ENCODE measurements at regions of chr4 and their contacts with region 1.

Region 1: DNA sequence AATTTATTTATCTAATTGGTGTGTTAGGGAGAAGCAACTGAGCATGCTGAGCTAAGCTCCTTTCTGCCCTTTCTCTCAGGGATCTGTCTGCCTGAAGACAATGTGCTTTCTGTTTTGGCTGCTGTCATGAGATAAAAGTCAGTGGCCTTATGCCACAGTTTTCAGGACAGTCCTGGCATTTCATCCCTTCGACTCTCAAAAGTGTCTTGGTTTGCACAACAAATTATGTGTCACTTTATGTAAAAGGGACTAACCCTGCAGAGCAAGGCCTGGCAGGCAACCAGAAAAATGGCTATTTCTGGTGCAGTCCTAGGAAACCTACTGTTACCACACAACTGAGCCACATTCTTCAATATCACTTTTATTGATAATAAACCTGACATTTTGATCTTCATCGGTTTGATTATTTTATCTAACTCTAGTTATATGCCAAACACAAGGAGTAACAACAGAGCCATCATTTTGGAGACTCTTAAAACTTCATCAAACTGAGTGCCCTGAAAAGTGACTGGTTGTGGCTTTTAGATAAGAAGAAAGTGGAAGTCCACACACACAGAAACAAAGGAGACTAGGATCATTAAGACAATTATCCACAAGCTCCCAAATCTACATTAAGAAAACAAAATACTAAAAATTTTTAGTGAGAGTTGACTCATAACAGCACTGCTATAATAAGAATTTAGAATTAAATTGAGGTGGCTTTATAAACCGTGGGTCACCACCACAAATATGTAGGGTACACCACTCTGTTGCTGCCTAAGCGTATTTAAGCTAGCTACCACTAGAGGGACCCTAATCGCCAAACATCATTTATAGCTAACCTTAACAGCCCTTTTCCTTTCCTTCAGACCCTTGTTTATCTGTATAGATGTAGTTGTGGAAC is 95.9 kb upstream of the PTPN13 start:
- DNase-seq: peak; percentile 32
- CTCF ChIP-seq: peak; percentile 87

Region 2: DNA sequence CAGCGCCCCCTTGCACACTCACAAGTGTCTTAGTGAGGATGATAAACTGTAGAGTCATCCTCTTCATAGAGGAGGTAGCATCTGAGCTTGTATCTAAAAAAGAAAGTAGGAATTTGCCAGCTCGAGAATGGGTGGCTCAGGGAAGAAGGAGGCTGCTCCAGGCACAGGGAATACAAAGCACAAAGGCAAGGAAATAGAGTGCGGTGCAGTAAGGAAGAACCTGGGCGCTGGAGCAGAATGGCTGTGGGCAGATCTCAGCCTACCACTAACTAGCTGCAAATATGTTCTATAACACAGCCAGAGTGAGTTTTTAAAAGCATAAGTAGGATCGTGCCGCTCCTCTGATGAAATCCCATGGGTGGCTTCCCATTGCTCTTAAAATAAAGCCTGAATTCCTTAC is 76.8 kb before region 1 on chr4:
- CTCF ChIA-PET with region 1: no interaction called
- POLR2A ChIA-PET with region 1: no interaction called
- DNase-seq: no peak
- CTCF ChIP-seq: no peak

Region 3: GRCh38 chr4:86472377-86473019 is 25.7 kb before region 1 on chr4:
- CTCF ChIA-PET with region 1: interaction called, 10 read pairs
- POLR2A ChIA-PET with region 1: no interaction called
- DNase-seq: no peak
- CTCF ChIP-seq: no peak

Region 4: GRCh38 chr4:86508436-86508835 is 10.2 kb after region 1 on chr4:
- CTCF ChIA-PET with region 1: interaction called, 109 read pairs
- POLR2A ChIA-PET with region 1: no interaction called
- DNase-seq: no peak
- CTCF ChIP-seq: no peak

Region 5: DNA sequence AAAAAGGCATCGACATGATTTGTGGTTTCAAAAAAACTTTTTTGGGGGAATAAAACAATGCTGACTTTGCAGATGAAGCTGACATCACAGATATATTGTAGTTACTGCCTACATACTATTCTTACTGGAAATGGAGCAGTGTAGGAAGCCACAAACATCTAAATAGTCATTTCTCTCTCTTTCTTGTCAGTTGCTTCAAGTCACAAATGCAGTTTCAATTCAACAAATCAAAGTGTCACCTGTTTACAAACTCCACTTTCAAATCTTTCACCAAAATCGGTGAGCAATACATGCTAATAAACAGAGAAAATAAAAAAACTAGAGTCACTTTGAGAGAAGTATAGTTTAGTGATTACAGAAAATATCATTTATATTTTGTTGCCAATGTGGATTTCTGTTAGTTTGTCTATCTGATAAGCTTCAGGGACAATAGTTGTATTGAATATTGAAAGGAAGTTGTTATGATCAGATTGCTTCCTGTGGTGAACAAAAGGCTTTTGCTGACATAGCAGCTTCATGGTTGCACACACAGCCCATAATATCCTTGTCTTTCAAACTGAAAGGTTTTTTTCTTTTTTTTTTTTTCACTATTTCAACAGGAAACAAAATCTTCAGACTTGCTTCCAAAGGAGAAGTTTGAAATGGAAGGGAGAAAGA is 46.2 kb after region 1 on chr4:
- CTCF ChIA-PET with region 1: interaction called, 13 read pairs
- POLR2A ChIA-PET with region 1: no interaction called
- DNase-seq: peak; percentile 37
- CTCF ChIP-seq: no peak

Region 6: DNA sequence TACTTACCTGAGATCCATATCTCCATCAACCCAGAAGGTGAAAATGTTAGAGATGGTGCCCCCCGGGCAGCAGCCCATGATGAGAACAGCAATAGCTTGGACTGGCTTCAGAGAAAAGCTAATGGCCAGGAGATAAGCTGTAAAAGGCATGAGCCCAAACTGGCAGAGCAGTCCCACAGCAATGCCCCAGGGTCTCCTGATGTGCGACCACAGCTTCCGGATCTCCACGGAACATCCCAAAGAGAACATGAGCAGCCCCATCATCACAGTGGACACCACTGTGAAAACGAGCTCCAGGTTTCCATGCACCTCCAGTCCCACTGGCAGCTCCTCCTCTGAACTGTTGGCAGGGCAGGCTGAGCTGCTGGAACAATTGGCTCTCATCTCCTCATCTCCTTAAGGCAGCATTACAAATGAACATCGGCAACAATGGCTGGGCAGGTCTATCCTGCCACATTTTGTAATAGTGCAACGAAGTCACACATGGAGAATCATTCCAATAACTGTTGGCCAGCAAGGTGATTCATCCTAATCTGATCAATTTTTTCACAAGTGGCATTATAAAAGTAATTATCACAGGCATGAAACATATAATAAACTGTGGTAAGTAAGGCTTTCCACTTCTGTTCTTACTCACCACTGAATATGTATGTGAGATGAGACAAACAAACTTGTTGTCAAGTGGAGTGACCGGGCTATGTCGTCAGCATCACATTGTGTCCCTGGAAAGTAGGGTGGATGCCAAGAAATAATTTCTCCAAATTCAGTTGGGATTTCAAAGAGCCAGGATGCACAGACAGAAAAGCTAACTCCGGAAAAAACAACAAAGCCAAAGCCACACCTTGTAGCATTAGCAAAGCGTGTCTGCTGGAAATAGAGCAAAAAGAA is 350.8 kb after region 1 on chr4 and contains the start of gene SLC10A6:
- CTCF ChIA-PET with region 1: interaction called, 21 read pairs
- POLR2A ChIA-PET with region 1: no interaction called
- DNase-seq: no peak
- CTCF ChIP-seq: no peak